GM18951 (cell line): ENCODE measurements at regions of chr19 and their contacts with region 1.

Region 1: GRCh38 chr19:48588670-48589399 is 17.7 kb upstream of the SPACA4 start:
- POLR2A ChIP-seq: no peak

Region 2: GRCh38 chr19:48321622-48322591 is 266.9 kb before region 1 on chr19:
- in situ Hi-C with region 1: loop called (anchors 25 kb)
- POLR2A ChIP-seq: peak; percentile 78

Region 3: GRCh38 chr19:48506138-48506733 is 82.6 kb before region 1 on chr19:
- in situ Hi-C with region 1: loop called (anchors 5 kb)
- POLR2A ChIP-seq: no peak

Region 4: GRCh38 chr19:48835734-48836088 is 246.9 kb after region 1 on chr19:
- in situ Hi-C with region 1: no loop called
- POLR2A ChIP-seq: peak; percentile 17